GM13977 (cell line): ENCODE measurements at regions of chr2 and their contacts with region 1.

Region 1: GRCh38 chr2:147910990-147911473 is 66.2 kb downstream of the ACVR2A start:
- DNase-seq: peak; percentile 9
- CTCF ChIP-seq: peak; percentile 59

Region 2: GRCh38 chr2:146734042-146734820 is 1176.8 kb before region 1 on chr2:
- in situ Hi-C with region 1: loop called (anchors 25 kb)
- DNase-seq: peak; percentile 23
- CTCF ChIP-seq: peak; percentile 59

Region 3: GRCh38 chr2:147051248-147051647 is 859.8 kb before region 1 on chr2:
- in situ Hi-C with region 1: loop called (anchors 25 kb)
- DNase-seq: no peak
- CTCF ChIP-seq: no peak

Region 4: DNA sequence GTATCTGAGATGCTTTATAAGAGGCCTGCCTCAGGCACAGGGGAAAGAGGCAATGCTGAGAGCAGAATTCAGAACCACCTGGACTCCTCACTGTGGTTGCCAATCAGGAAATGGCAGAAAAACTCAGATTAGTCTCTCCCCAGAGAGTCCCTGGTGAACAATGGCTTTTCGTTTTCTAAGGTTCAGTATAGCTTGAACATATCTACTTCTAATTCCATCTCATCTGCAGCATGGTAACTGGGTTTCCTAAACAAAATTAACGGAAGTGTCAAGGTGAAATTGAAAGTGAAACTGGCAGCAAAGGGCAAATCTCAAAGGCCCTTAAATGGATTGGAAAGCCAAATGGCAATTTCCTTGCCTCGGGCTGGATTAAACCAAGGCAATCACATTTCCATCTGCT is 546.4 kb before region 1 on chr2:
- in situ Hi-C with region 1: loop called (anchors 25 kb)
- DNase-seq: peak; percentile 13
- CTCF ChIP-seq: no peak